A673 (cell line): ENCODE measurements at regions of chrX and their contacts with region 1.

Region 1: DNA sequence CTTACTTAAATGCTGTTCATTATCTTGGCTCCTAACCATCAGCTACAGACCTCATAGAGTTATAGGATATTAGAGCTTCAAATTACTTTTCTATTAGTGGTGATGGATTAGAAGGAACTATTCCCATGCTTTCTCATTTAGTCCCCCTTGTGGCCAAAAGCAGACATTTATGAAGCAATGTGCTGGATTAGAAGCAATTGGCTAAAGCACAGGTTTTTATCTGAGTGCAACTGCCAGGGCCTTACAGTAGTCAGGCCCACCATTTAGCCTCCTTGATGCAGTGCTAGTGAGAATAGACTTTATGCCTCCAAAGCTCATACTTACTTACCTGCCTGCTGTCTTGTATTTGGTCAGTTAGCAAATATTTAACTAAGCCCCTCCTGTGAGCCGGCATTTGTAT is 93.0 kb downstream of the TSPAN7 start:
- DNase-seq: peak; percentile 45
- H3K4me3 ChIP-seq: no peak overlapping the region
- H3K27ac ChIP-seq: no peak overlapping the region
- H3K4me1 ChIP-seq: no peaks in the 10 kb centered on the region
- H3K27me3 ChIP-seq: peaks cover 3% of the 10 kb centered on the region
- CTCF ChIP-seq: peak; percentile 64

Region 2: DNA sequence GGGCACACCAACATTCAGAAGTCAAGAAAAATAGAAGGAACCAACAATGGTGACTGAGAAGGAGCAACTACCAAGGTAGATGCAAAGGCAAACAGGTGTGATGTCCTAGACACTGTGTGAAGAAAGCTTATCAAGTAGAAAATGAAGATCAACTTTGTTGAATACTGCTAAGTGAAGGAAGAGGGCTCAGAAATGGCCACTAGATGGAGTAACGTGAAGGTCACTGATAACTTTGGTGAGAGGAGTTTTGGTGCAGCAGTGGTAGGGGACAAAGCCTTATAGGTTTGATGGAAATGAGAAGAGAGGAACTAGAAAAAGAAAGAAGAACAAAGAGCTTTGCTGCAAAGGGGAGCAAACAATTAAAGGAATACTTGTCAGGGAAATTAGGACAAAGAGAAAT is 278.4 kb before region 1 on chrX:
- CTCF ChIA-PET with region 1: no interaction called
- POLR2A ChIA-PET with region 1: no interaction called
- intact Hi-C with region 1: loop called (anchors 10 kb)
- DNase-seq: peak; percentile 35
- H3K4me3 ChIP-seq: no peak overlapping the region
- H3K27ac ChIP-seq: no peak overlapping the region
- H3K4me1 ChIP-seq: no peaks in the 10 kb centered on the region
- H3K27me3 ChIP-seq: peaks cover 7% of the 10 kb centered on the region
- CTCF ChIP-seq: peak; percentile 63

Region 3: GRCh38 chrX:38458071-38458470 is 196.2 kb before region 1 on chrX:
- CTCF ChIA-PET with region 1: no interaction called
- POLR2A ChIA-PET with region 1: no interaction called
- intact Hi-C with region 1: loop called (anchors 2 kb)
- DNase-seq: peak; percentile 6
- H3K4me3 ChIP-seq: no peak overlapping the region
- H3K27ac ChIP-seq: no peak overlapping the region
- H3K4me1 ChIP-seq: no peaks in the 10 kb centered on the region
- H3K27me3 ChIP-seq: no peaks in the 10 kb centered on the region
- CTCF ChIP-seq: no peak; the same call in 1 of the 2 replicates